IMR-90 (cell line): ENCODE measurements at regions of chr12 and their contacts with region 1.

Region 1: DNA sequence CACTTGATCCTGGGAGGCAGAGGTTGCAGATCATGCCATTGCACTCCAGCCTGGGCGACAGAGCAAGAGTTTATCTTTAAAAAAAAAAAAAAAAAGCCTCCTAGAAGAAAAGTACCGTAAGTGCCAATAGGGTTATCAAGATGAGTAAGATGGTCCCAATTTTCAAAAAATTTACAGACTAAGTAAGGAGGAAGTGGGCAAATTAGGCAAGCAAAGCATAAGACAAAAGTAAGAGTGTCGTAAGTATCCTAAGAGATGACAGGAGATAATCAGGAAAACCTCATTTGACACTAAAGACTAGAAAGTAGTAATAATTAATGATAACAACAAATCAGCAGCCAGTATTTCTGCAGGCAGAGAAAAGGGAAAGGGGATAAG is 12.2 kb downstream of the PYM1 start:
- DNase-seq: no peak
- ATAC-seq: no peak
- H3K4me3 ChIP-seq: no peak overlapping the region
- H3K27ac ChIP-seq: no peak overlapping the region
- H3K4me1 ChIP-seq: no peaks in the 10 kb centered on the region
- H3K27me3 ChIP-seq: no peaks in the 10 kb centered on the region
- CTCF ChIP-seq: no peak
- POLR2A ChIP-seq: no peak
- RAD21 ChIP-seq: no peak

Region 2: GRCh38 chr12:57401165-57401564 is 1485.7 kb after region 1 on chr12:
- CTCF ChIA-PET with region 1: no interaction called
- POLR2A ChIA-PET with region 1: no interaction called
- dilution Hi-C with region 1: no loop called
- in situ Hi-C with region 1: no loop called
- intact Hi-C with region 1: loop called (anchors 10 kb)
- DNase-seq: no peak
- ATAC-seq: no peak
- H3K4me3 ChIP-seq: no peak overlapping the region
- H3K27ac ChIP-seq: no peak overlapping the region
- H3K4me1 ChIP-seq: no peaks in the 10 kb centered on the region
- H3K27me3 ChIP-seq: no peaks in the 10 kb centered on the region
- CTCF ChIP-seq: no peak
- POLR2A ChIP-seq: no peak
- RAD21 ChIP-seq: no peak